ENCODE measurements at regions of chr2 and their contacts with region 1.

Region 1: DNA sequence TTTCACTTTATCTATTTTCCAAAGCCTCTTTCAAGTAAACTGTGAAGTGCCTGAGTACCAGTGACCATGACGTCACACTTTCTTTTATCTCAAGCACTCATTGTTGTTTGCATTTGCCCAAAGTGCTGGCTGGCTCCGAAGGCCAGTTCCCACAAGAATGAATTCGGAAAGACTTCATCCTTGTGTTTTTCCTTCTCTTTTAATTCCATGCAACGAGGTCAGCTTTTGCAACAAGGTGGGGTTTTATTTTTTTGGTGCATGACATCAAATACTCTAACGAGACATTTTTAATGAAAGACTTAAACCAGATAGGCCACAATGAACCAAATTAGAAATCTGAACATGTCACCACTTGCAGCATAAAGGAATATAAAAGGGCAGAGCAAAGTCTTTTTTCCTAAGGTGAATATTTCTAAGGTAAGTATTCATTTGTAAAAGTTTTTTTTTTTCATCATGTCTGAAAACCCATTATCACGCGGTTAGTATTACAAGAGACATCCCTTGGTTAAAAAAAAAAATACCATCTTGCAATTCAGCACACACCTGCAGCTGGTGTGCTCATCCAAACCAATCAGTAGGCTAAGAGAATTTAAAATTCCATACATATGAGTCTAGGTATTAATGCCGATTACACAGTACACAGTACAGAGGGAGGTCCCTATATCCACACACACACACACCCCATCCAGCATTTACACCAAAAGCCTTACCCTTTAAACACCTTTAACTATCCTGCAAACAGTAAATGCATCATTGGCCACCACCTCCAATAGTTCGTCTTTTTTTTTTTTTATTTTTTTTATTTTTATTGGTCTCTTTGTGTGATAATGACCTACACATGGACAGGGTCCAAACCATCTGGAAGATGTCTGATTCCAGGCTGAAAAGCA is 2.3 kb downstream of the ARL4C start:
- DNase-seq: no peak
- H3K4me3 Mint-ChIP-seq: peak overlapping the region; percentile 97
- H3K27ac Mint-ChIP-seq: peak overlapping the region; percentile 96
- H3K4me1 Mint-ChIP-seq: peaks cover 52% of the 10 kb centered on the region
- H3K27me3 Mint-ChIP-seq: no peaks in the 10 kb centered on the region

Region 2: GRCh38 chr2:233990261-233990798 is 504.3 kb before region 1 on chr2:
- intact Hi-C with region 1: loop called (anchors 2 kb)
- DNase-seq: peak; percentile 58
- H3K4me3 Mint-ChIP-seq: no peak overlapping the region
- H3K27ac Mint-ChIP-seq: no peak overlapping the region
- H3K4me1 Mint-ChIP-seq: peaks cover 34% of the 10 kb centered on the region
- H3K27me3 Mint-ChIP-seq: peaks cover 19% of the 10 kb centered on the region

Region 3: GRCh38 chr2:234278556-234279255 is 215.9 kb before region 1 on chr2:
- intact Hi-C with region 1: loop called (anchors 1 kb)
- DNase-seq: peak; percentile 28
- H3K4me3 Mint-ChIP-seq: no peak overlapping the region
- H3K27ac Mint-ChIP-seq: peak overlapping the region; percentile 71
- H3K4me1 Mint-ChIP-seq: peaks cover 66% of the 10 kb centered on the region
- H3K27me3 Mint-ChIP-seq: no peaks in the 10 kb centered on the region

Region 4: DNA sequence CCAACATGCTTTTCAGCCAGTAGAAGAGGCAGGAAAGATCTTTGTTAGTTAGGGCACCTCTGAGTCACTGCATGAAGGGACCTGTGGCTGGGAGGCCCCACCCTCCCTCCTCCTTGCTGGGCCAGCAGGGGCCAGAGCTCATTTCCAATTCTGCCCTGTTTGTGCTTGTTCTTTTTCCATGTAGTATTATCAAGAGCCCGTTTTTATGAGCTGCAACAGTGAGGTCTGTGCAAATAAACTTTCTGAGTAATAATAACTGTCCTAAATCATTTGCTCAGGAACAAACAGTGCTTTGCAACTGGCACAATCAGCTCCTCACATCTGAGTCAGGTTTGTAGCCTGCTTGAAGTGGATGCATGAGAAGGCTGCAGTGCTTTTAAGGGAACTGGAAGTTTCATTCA is 125.7 kb before region 1 on chr2:
- intact Hi-C with region 1: loop called (anchors 2 kb)
- DNase-seq: peak; percentile 34
- H3K4me3 Mint-ChIP-seq: no peak overlapping the region
- H3K27ac Mint-ChIP-seq: peak overlapping the region; percentile 75
- H3K4me1 Mint-ChIP-seq: peaks cover 66% of the 10 kb centered on the region
- H3K27me3 Mint-ChIP-seq: no peaks in the 10 kb centered on the region

Region 5: GRCh38 chr2:234451852-234452625 is 42.6 kb before region 1 on chr2:
- intact Hi-C with region 1: loop called (anchors 1 kb)
- DNase-seq: no peak
- H3K4me3 Mint-ChIP-seq: peak overlapping the region; percentile 91
- H3K27ac Mint-ChIP-seq: peak overlapping the region; percentile 92
- H3K4me1 Mint-ChIP-seq: peaks cover 83% of the 10 kb centered on the region
- H3K27me3 Mint-ChIP-seq: no peaks in the 10 kb centered on the region

Region 6: DNA sequence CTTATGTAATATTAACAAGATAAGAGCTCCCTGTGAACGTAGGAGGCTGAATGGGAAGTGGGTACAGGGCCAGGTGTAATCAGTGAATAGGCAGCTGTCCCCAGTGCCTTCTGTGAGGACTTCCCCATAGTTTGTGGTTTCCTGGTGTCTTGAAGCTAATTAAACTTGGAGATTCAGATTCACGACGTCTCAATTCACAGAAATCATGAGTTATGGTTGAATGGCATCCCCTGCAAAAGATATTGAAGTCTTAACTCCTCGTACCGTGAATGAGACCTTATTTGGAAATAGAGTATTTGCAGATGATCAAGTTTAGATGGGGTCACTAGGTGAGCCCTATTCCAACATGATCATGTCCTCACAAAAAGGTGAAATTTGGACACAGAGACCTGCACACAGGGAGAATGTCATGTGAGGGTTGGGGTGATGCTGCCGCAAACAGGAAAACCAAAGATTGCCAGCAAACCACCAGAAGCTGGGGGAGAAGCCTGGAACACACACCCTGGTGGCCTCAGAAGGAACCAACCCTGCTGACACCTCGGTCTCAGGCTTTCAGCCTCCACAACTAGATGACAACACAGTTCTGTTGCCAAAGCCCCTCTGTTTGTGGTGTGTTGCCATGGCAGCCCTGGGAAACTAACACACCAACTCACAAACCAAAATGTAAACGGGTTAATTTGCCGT is 10.9 kb before region 1 on chr2:
- intact Hi-C with region 1: loop called (anchors 1 kb)
- DNase-seq: peak; percentile 82
- H3K4me3 Mint-ChIP-seq: peak overlapping the region; percentile 53
- H3K27ac Mint-ChIP-seq: peak overlapping the region; percentile 82
- H3K4me1 Mint-ChIP-seq: peaks cover 80% of the 10 kb centered on the region
- H3K27me3 Mint-ChIP-seq: no peaks in the 10 kb centered on the region